ENCODE measurements at regions of chr9 and their contacts with region 1.

Region 1: GRCh38 chr9:20929276-20929675 is 102.2 kb downstream of the HACD4 start:
- DNase-seq: no peak
- ATAC-seq: no peak
- H3K4me3 ChIP-seq: no peak overlapping the region
- H3K27ac ChIP-seq: no peak overlapping the region
- H3K4me1 ChIP-seq: no peaks in the 10 kb centered on the region
- H3K27me3 ChIP-seq: no peaks in the 10 kb centered on the region
- CTCF ChIP-seq: no peak
- EP300 ChIP-seq: no peak
- POLR2A ChIP-seq: no peak
- RAD21 ChIP-seq: no peak

Region 2: GRCh38 chr9:20865347-20865746 is 63.9 kb before region 1 on chr9:
- CTCF ChIA-PET with region 1: no interaction called
- POLR2A ChIA-PET with region 1: no interaction called
- in situ Hi-C with region 1: no loop called
- intact Hi-C with region 1: loop called (anchors 2 kb)
- DNase-seq: no peak
- ATAC-seq: no peak
- H3K4me3 ChIP-seq: no peak overlapping the region
- H3K27ac ChIP-seq: no peak overlapping the region
- H3K4me1 ChIP-seq: no peaks in the 10 kb centered on the region
- H3K27me3 ChIP-seq: no peaks in the 10 kb centered on the region
- CTCF ChIP-seq: no peak
- EP300 ChIP-seq: no peak
- POLR2A ChIP-seq: no peak
- RAD21 ChIP-seq: no peak

Region 3: DNA sequence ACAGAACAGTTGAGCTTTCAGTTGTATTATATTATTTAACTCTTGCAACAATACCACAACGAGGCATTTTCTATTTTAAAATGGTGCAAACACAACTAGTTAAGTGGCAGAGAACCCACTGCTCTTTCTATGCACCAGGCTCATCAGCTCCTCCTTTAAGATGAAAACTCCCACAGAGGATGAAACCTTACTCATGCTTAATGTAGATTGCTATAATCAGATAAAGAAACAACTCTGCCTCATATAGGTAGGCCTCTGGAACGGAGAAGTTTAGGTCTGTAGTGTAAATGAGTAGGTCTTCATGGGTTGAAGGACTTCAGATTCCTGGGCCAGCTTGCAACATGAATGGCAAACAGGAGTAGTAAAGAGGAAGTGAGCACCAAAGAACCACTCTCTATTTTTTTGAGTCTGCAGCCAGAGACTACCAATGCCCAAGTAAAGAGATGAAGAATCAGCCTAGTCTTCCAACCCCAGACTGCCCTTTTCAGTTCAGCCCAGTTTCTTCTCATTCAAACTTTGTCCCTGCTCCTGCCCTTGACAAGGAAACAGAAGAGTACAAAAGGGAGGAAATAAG is 68.3 kb after region 1 on chr9:
- CTCF ChIA-PET with region 1: no interaction called
- POLR2A ChIA-PET with region 1: no interaction called
- in situ Hi-C with region 1: no loop called
- intact Hi-C with region 1: no loop called
- DNase-seq: no peak
- ATAC-seq: no peak
- H3K4me3 ChIP-seq: no peak overlapping the region
- H3K27ac ChIP-seq: no peak overlapping the region
- H3K4me1 ChIP-seq: no peaks in the 10 kb centered on the region
- H3K27me3 ChIP-seq: no peaks in the 10 kb centered on the region
- CTCF ChIP-seq: no peak
- EP300 ChIP-seq: no peak
- POLR2A ChIP-seq: no peak
- RAD21 ChIP-seq: no peak

Measured in HepG2 (cell line).